Right ventricle myocardium inferior (tissue), 1 donor: ENCODE measurements at regions of chr7 and their contacts with region 1.

Region 1: DNA sequence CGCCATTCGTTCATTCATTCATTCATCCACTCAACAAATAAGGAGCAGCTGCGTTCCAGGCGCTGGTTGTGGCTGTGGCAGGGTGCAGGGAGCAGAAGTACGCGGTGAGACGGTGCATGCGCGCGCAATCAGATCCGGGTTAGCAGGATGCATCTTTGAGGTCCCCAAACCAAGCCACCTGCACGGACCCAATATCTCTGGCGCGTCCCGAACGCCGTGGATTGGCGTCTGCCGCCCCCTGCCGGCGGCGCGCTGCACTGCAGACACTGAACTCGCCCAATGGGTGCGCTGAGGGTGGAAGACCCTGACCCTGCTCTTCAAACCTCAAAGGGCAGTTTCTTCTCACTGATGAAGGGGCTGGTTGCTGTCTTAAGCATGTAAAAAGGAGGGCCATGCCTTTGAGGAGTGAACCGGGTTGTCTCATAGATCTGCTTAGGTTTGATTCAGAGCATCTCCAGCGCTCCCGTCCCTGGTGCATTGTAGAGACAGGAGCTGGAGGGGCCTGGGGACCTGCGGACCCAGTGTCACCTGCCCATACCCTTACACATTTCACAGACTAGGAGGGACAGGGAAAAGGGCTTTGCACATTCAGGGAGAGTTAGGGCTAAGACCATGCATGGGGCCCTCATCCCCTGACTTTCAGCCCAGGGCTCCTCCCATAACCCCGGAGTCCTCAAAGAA is 102.5 kb downstream of the RAMP3 start:
- DNase-seq: peak; percentile 87
- ATAC-seq: peak; percentile 76

Region 2: DNA sequence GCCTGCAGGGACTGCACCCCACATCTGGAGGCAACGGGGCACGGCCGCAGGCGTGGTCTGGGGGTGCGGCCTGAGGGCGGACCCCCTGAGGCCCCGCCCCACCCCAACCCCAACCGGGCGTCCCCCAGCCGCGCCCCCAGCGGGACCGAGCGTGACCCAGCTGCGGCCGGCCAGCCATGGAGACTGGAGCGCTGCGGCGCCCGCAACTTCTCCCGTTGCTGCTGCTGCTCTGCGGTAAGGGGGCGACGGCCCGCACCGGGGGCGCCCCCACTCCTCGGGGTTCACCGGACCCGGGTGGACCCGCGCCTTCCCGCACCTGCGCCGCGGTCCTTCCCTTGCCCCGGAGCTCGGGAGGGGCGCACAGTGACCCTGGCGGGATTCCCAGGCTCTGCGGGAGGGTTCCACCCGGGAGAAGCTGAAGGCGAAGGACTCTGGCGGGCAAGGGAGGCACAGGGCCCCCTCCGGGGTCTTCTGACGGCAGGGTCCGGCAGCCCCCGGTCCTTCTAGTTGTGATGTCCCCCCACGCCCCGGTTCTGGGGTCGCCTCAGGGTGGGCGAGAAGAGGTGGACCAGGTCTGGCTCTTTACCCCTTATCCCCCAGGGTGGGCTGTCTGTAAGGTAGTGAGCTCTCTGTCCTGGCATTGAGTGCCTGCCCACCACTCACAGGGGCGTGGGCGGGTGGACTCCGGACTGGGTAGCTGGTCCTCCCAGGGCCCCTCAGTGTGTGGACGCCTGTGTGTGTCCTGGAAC is 102.3 kb before region 1 on chr7 and contains the start of gene RAMP3:
- intact Hi-C with region 1: loop called (anchors 1 kb)
- DNase-seq: no peak
- ATAC-seq: peak; percentile 40
- total RNA-seq, gene RAMP3: 33.8 TPM

Region 3: DNA sequence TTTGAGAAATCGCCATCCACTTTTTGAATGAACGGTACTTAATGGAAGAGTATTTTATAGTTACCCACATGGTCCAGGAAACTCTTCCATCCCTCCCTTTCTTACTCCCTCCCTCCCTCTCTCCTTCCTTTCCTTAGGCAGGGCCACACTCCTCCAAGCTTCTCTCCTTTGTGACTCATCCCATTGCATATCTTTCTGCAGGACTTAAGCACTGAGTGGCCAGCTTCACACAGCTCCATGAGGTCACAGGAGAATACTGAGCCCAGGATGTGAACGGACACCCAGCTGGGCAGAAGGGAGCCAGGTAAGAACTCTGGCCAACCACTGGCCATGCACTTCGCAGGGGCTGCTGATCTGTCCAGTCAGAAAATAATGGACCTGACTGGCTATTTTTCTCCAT is 124.4 kb after region 1 on chr7:
- intact Hi-C with region 1: no loop called
- DNase-seq: no peak
- ATAC-seq: peak; percentile 42